ENCODE measurements at regions of chr1 and their contacts with region 1.

Region 1: DNA sequence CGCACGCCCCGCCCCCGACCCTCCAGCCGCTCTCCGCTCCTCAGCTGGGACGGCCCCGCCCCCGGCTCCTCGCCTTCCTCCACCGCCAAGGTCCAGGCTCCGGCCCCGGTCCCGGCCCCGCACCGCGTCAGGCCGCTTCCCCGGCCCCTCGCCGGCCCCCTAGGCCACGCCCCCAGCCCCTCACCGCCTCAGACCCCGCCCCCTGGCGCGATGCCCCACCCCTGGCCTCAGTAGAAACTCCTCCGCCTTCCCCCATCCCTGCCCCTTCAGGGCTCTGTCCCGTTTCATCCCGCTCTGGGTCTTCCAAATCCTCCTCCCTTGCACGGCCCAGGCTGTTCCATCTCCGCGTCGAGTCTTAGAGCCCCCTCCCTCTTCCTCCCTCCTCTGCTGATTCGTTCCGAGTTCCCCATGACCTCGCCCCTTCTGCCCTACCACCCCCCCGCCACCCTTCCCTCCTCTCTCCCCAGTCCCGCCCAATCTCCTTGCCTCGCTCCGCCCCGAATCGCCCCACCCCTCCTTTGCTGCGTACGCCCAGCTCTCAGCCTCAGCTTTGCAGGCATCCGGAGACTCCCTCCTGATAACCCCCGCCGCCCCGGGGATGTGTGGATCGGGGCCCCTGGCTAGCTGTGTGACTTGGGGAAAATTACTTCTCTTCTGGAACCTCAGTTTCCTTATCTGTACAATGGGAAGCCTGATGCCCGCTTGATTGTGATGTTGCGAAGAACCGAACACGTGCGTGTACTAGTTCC is 448 bp upstream of the ASAP3 start:
- DNase-seq: peak; percentile 97
- ATAC-seq: peak; percentile 87
- H3K4me3 Mint-ChIP-seq: peak overlapping the region; percentile 82
- H3K27ac Mint-ChIP-seq: peak overlapping the region; percentile 96
- H3K4me1 Mint-ChIP-seq: peaks cover 44% of the 10 kb centered on the region
- H3K27me3 Mint-ChIP-seq: peaks cover 13% of the 10 kb centered on the region
- CTCF ChIP-seq: no peak

Region 2: GRCh38 chr1:22794647-22795365 is 689.6 kb before region 1 on chr1:
- CTCF ChIA-PET with region 1: no interaction called
- POLR2A ChIA-PET with region 1: no interaction called
- DNase-seq: no peak
- ATAC-seq: no peak; the same call in 1 of the 2 replicates
- H3K4me3 Mint-ChIP-seq: no peak overlapping the region
- H3K27ac Mint-ChIP-seq: no peak overlapping the region
- H3K4me1 Mint-ChIP-seq: peaks cover 33% of the 10 kb centered on the region
- H3K27me3 Mint-ChIP-seq: no peaks in the 10 kb centered on the region; the same call in 1 of the 2 replicates
- CTCF ChIP-seq: no peak

Region 3: GRCh38 chr1:23021834-23022233 is 462.6 kb before region 1 on chr1:
- CTCF ChIA-PET with region 1: no interaction called
- POLR2A ChIA-PET with region 1: no interaction called
- DNase-seq: no peak
- ATAC-seq: no peak
- H3K4me3 Mint-ChIP-seq: peak overlapping the region; percentile 96
- H3K27ac Mint-ChIP-seq: no peak overlapping the region
- H3K4me1 Mint-ChIP-seq: peaks cover 32% of the 10 kb centered on the region
- H3K27me3 Mint-ChIP-seq: no peaks in the 10 kb centered on the region
- CTCF ChIP-seq: no peak

Region 4: GRCh38 chr1:23436520-23437354 is 47.7 kb before region 1 on chr1:
- CTCF ChIA-PET with region 1: interaction called, 11 read pairs
- POLR2A ChIA-PET with region 1: no interaction called
- DNase-seq: peak; percentile 99
- ATAC-seq: peak; percentile 96
- H3K4me3 Mint-ChIP-seq: peak overlapping the region; percentile 45
- H3K27ac Mint-ChIP-seq: no peak overlapping the region
- H3K4me1 Mint-ChIP-seq: peaks cover 6% of the 10 kb centered on the region
- H3K27me3 Mint-ChIP-seq: no peaks in the 10 kb centered on the region
- CTCF ChIP-seq: no peak

Region 5: GRCh38 chr1:23507507-23507906 is 23.1 kb after region 1 on chr1:
- CTCF ChIA-PET with region 1: no interaction called
- POLR2A ChIA-PET with region 1: no interaction called
- DNase-seq: no peak
- ATAC-seq: no peak
- H3K4me3 Mint-ChIP-seq: no peak overlapping the region
- H3K27ac Mint-ChIP-seq: no peak overlapping the region
- H3K4me1 Mint-ChIP-seq: 0 out of 2 replicates have a peak, but pooled peaks cover 7% of the 10 kb centered on the region
- H3K27me3 Mint-ChIP-seq: no peaks in the 10 kb centered on the region; the same call in 1 of the 2 replicates
- CTCF ChIP-seq: no peak

Region 6: DNA sequence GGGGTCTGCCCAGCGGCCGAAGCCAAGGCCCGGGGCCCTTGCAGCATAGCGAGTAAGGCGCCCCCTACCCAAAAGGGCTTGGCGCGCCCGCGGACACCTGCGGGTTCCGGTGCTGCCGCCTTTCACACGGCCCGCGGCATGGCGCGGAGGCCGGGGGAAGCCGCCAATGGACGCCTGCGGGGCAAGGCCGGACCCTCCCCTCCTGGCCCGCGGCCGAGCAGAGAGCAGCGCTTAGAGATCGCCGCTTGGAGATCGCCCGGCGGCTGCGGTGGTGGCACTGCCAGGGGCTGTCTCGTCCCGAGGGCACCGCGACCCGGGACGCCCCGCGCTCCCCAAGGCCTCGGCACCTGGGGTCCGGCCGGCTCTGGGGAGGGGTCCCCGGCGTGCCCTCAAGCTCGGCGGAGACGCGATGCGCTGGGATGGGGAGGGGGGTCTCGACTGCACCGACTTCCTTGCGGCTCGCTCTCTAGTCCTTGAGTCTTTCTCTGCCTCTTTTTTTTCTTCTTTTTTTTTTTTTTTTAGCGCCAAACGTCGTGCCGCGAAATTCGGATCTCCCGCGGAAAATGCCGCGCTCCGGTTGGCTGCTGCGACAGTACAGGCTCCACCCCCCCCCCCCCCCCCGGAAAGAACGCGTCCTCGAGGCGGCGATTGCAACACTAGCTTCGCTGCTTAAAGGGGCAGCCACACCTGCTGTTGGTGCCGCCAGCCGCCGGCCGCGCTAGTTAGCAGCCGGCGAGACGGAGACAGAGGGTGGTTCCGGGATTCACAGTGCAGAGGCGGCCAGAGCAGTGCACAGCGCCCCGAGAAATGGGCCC is 46.5 kb after region 1 on chr1 and contains the start of gene E2F2:
- CTCF ChIA-PET with region 1: interaction called, 24 read pairs
- POLR2A ChIA-PET with region 1: no interaction called
- DNase-seq: peak; percentile 78
- ATAC-seq: peak; percentile 81
- H3K4me3 Mint-ChIP-seq: peak within 1 kb of the TSS; percentile 80
- H3K27ac Mint-ChIP-seq: no peak within 1 kb of the TSS
- H3K4me1 Mint-ChIP-seq: peaks cover 23% of the 10 kb centered on the region
- H3K27me3 Mint-ChIP-seq: peaks cover 52% of the 10 kb centered on the region
- CTCF ChIP-seq: no peak
- total RNA-seq, gene E2F2: 4.9 to 5.6 TPM (median 5.4 TPM) in 3 replicates

Measured in WTC11 (cell line).